AG04449 (cell line): ENCODE measurements at regions of chr1 and their contacts with region 1.

Region 1: DNA sequence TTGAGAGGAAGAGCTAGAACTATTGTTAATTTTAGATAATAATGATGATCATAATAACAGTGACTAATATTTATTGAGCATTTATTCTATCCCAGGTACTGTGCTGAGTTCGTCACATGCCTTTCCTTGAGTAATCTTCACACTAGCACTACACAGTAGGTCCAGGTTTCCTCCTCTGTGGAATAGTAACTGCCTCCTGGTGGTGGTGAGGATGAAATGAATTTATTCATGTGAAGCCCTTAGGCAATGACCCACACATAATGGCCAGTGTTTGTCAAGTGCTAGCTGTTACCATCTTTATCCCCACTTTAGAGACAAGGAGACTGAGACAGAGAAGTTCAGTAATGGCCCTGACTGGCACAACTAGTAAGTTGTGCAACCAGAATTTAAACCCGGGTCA is 5.9 kb downstream of the NIPAL3 start:
- DNase-seq: no peak
- H3K4me3 ChIP-seq: no peak overlapping the region
- CTCF ChIP-seq: no peak

Region 2: DNA sequence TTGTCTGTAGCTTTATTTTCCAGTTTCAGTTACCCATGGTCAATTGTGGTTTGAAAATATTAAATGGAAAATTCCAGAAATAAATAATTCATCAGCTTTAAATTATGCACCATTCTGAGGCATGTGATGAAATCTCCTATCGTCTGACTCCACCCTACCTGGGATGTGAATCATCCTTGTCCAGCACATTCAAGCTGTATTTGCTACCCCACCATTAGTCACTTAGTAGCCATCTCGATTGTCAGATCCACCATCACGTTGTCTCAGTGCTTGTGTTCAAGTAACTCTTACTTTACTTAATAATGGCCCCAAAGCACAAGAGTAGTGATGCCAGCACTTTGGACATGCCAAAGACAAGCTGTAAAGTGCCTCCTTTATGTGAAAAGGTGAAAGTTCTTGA is 12.0 kb before region 1 on chr1:
- CTCF ChIA-PET with region 1: interaction called, 42 read pairs
- POLR2A ChIA-PET with region 1: no interaction called
- DNase-seq: no peak
- H3K4me3 ChIP-seq: no peak overlapping the region
- CTCF ChIP-seq: no peak